WTC11 (cell line): ENCODE measurements at regions of chr12 and their contacts with region 1.

Region 1: DNA sequence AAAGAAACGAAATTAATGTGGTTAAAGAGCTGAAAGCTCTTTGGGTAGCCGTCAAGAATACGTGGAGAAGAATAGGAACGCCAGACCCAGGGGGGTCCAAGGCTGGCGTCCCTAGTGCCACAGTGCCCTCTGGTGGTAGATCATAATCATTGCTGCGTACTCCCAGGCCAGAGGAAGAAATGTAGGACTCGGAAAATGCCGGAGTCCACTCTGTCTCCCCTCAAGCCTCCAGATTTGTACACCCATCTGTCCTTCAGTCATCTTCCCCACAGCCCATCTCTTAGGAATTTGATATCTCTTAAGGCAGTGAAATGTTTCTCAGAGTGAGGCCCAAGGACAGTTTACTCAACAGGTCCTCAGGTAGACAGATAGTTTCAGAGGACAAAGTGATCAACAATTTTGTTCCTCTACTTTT is 25.4 kb upstream of the PLEKHG6 start:
- DNase-seq: peak; percentile 73
- ATAC-seq: peak; percentile 88
- H3K4me3 Mint-ChIP-seq: no peak overlapping the region
- H3K27ac Mint-ChIP-seq: no peak overlapping the region
- H3K4me1 Mint-ChIP-seq: peaks cover 20% of the 10 kb centered on the region
- H3K27me3 Mint-ChIP-seq: peaks cover 5% of the 10 kb centered on the region
- CTCF ChIP-seq: peak; percentile 95

Region 2: DNA sequence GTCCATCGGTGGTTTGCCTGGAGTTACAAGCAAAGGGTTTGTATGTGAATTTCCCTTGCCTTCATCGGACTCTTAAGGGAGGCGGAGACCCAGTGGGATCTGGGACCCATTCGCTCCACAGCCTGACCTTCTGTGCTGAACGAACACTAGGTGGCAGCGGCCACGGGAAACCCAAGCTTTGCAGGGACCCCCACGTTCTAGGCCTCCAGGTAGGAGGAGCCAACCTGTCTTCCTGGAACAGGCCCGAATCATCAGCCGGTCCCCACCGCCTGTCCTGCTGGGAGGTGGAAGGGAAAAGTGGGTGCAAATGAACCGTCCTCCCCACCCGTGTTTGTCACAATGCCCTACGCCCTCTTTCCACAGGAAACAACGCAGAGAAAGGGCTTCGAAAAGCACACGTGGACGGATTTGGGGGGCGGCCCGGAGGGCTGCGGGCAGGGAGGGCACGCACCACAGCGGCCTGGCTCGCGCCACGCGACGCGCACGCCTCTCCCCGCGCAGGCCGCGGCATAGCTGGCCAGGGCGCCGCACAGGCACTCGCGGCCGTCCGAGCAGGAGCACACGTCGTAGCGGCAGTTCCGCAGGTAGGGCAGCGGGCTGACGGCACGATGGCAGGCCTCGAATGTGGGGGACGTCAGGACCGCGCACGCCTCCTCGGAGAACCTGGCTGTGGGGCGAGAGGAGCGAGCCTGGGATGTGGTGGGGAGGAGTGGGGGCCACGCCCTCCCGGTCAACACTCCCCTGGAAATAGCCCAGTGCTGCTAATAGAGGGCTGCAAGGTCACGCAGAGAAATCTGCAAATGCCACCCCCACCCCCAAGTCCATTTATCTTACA is 228.4 kb before region 1 on chr12:
- CTCF ChIA-PET with region 1: interaction called, 77 read pairs
- POLR2A ChIA-PET with region 1: no interaction called
- DNase-seq: peak; percentile 70
- ATAC-seq: peak; percentile 79
- H3K4me3 Mint-ChIP-seq: peak overlapping the region; percentile 59
- H3K27ac Mint-ChIP-seq: no peak overlapping the region
- H3K4me1 Mint-ChIP-seq: peaks cover 29% of the 10 kb centered on the region
- H3K27me3 Mint-ChIP-seq: peaks cover 6% of the 10 kb centered on the region
- CTCF ChIP-seq: no peak

Region 3: DNA sequence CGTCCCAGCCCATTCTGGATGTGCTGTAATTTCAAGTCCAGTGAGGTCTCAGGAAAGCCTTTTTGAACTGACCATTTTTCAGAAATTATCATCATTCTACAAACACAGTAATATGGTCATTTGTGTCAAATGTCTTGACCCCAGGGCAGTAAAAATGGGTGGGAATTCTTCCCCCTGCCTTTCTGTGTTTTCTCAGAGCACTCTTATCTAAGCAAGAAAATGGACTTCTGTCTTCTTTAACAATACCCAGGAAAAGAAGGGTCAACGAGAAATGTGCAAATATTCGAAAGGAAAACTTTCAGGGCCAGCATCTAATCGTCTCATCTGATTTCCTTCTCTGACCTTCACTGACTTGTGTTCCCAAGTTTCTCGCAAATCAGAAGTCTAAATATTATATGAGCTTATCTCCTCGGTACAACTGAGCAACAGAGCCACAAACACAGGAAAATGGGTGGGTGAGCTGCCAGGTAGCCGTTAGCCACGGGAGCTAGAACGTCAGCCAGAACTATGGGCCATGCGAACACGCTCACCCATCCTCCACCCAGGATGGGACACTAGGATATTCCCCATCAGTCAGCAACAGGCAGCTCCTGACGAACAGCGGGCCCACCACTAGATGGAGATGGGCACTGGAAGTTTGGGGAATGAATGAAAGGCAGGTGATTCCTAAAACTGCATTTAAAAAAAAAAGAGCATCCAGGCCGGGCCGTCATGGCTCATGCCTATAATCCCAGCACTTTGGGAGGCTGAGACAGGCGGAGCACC is 217.7 kb before region 1 on chr12:
- CTCF ChIA-PET with region 1: interaction called, 84 read pairs
- POLR2A ChIA-PET with region 1: no interaction called
- DNase-seq: peak; percentile 75
- ATAC-seq: peak; percentile 60
- H3K4me3 Mint-ChIP-seq: no peak overlapping the region
- H3K27ac Mint-ChIP-seq: no peak overlapping the region; the same call in 1 of the 2 replicates
- H3K4me1 Mint-ChIP-seq: peaks cover 18% of the 10 kb centered on the region
- H3K27me3 Mint-ChIP-seq: no peaks in the 10 kb centered on the region
- CTCF ChIP-seq: no peak

Region 4: DNA sequence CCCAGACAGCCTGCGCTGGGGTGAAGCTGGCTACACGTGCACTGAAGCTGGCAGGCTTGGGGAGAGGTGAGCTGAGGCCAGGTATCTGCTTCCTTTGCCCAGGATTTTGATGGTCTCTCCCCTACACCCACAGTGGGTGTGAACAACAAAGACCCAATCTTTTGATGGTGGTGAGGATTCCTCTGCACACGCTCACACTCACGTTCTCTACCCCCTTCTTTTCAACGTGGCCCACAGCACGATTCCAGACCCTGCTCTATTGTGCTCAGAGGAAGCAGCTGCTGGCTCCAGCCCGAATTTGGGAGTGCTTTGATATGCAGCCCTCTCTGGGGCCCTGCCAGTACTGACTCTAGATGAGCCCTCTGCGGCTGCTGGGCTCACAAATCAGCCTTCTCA is 79.9 kb before region 1 on chr12:
- CTCF ChIA-PET with region 1: interaction called, 431 read pairs
- POLR2A ChIA-PET with region 1: no interaction called
- DNase-seq: peak; percentile 75
- ATAC-seq: peak; percentile 88
- H3K4me3 Mint-ChIP-seq: peak overlapping the region; percentile 33
- H3K27ac Mint-ChIP-seq: peak overlapping the region; percentile 98
- H3K4me1 Mint-ChIP-seq: peaks cover 87% of the 10 kb centered on the region
- H3K27me3 Mint-ChIP-seq: no peaks in the 10 kb centered on the region
- CTCF ChIP-seq: no peak

Region 5: GRCh38 chr12:6272300-6273204 is 12.5 kb before region 1 on chr12:
- CTCF ChIA-PET with region 1: interaction called, 35 read pairs
- POLR2A ChIA-PET with region 1: no interaction called
- DNase-seq: no peak
- ATAC-seq: peak; percentile 25
- H3K4me3 Mint-ChIP-seq: no peak overlapping the region
- H3K27ac Mint-ChIP-seq: peak overlapping the region; percentile 93
- H3K4me1 Mint-ChIP-seq: peaks cover 61% of the 10 kb centered on the region
- H3K27me3 Mint-ChIP-seq: no peaks in the 10 kb centered on the region; the same call in 1 of the 2 replicates
- CTCF ChIP-seq: no peak

Region 6: DNA sequence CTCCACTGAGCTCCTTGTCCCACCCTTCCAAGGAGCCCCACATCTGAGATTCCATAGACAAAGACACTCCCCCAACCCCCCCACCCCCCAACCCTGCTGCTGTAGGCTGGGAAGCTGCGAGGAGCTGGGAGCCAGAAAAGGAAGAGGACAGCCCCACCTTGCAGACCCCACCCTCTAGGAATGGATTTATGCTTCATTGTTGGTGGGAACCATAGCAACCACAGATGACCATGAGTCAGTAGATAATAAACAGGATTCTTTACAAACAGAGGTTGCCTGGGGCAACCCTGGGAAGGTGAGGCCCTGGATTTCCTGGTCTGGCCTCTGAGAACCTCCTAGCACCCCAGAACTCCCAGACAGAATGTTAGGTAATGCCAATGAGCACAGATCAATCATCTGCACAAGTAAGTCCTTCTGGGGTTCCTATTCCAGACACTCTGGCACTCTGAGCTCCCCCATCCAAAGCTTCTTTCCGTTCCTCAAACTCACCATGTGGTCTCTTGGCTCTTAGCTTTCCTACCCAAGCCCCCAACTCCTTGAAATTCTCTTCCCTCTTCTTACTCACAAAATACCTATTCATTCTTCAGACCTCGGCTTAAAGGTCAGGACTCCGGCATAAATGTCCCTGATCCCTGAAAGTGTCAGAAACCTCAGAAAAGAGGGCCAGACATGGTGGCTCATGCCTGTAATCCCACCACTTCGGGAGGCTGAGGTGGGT is 10.2 kb after region 1 on chr12:
- CTCF ChIA-PET with region 1: interaction called, 11 read pairs
- POLR2A ChIA-PET with region 1: interaction called, 5 read pairs
- DNase-seq: no peak
- ATAC-seq: no peak
- H3K4me3 Mint-ChIP-seq: no peak overlapping the region
- H3K27ac Mint-ChIP-seq: no peak overlapping the region
- H3K4me1 Mint-ChIP-seq: peaks cover 19% of the 10 kb centered on the region
- H3K27me3 Mint-ChIP-seq: peaks cover 4% of the 10 kb centered on the region; the same call in 1 of the 2 replicates
- CTCF ChIP-seq: no peak

Region 7: DNA sequence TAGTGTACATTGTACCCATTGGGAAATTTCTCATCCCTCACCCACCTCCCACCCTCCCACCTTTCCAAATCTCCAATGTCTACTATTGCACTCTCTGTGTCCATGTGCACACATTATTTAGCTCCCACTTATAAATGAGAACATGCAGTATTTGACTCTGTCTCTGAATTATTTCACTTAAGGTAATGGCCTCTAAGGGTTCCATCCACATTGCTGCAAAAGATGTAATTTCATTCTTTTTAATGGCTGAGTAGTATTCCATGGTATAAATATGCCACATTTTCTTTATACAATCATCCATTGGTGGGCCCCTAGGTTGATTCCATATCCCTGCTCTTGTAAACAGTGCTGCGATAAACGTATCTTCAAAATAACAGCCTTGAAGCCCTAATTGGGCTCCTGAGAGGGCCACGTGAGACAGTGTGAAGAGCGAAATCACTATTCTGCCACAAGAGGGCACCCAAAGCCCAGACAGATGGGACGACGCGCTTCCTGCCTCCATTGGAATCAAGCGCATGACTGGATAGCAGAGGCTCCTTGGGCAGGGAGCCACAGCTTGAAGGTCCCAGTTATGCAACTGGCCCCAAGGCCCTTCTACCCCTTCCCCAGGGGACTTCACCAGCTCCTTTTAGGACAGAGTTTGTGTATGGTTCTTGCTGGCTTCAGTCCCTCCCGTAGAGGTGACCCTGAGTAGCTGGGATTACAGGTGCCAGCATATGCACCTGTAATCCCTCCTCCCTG is 138.4 kb after region 1 on chr12:
- CTCF ChIA-PET with region 1: no interaction called
- POLR2A ChIA-PET with region 1: no interaction called
- DNase-seq: peak; percentile 77
- ATAC-seq: peak; percentile 96
- H3K4me3 Mint-ChIP-seq: no peak overlapping the region
- H3K27ac Mint-ChIP-seq: no peak overlapping the region
- H3K4me1 Mint-ChIP-seq: peaks cover 8% of the 10 kb centered on the region
- H3K27me3 Mint-ChIP-seq: no peaks in the 10 kb centered on the region; the same call in none of the 2 replicates
- CTCF ChIP-seq: peak; percentile 83; the same call in 1 of the 2 replicates

Region 8: DNA sequence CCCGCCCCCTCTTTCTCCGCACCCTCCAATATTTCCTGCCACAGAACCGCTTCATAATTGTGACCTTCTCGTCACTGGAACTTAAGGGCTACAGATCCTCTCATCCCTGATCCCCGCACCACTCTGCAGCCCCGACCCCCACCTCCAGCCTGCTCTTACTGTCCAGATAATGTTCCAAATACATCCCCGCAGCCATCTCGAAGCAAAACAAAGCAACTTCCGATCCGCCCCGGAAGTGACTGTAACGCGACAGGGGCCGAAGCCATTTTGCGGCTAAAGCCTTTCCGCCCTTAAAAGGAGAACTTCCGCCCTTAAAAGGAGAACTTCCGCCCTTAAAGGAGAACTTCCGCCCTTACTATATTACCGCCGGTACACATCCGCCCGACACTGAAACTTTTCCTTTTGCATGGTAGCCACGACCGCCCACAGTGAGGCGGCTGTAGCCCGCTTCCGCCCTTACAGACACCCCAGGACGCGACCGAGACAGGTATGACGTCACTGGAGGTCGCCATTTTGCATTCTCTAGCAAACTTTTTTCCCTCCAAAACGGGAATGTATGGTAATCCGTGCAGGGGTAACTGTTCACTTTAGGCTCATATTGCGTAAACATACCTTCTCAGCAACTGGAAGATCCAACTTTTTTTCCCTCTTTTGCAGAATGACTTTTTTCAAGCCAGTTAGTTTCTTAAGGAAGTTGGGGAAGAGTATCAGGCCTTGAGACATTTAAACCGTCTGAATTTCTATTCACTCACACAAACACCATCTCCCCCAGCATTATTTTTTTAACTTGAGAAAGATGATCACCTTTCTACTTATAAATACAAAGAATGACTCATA is 378.1 kb after region 1 on chr12 and contains the start of gene ING4:
- CTCF ChIA-PET with region 1: no interaction called
- POLR2A ChIA-PET with region 1: no interaction called
- DNase-seq: peak; percentile 94
- ATAC-seq: peak; percentile 96
- H3K4me3 Mint-ChIP-seq: peak within 1 kb of the TSS; percentile 98
- H3K27ac Mint-ChIP-seq: peak within 1 kb of the TSS; percentile 98
- H3K4me1 Mint-ChIP-seq: peaks cover 6% of the 10 kb centered on the region
- H3K27me3 Mint-ChIP-seq: no peaks in the 10 kb centered on the region; the same call in 1 of the 2 replicates
- CTCF ChIP-seq: no peak
- total RNA-seq, gene ING4: 23.0 to 27.4 TPM (median 26.7 TPM) in 3 replicates